Panc1 (cell line): ENCODE measurements at regions of chr3 and their contacts with region 1.

Region 1: GRCh38 chr3:25594007-25594502 is 70.7 kb downstream of the TOP2B start:
- DNase-seq: no peak
- ATAC-seq: no peak
- H3K4me3 ChIP-seq: no peak overlapping the region
- H3K27ac ChIP-seq: no peak overlapping the region
- H3K4me1 ChIP-seq: no peaks in the 10 kb centered on the region
- H3K27me3 ChIP-seq: no peaks in the 10 kb centered on the region
- CTCF ChIP-seq: peak; percentile 62; the same call in 1 of the 2 replicates

Region 2: GRCh38 chr3:24773798-24774197 is 820.3 kb before region 1 on chr3:
- CTCF ChIA-PET with region 1: no interaction called
- POLR2A ChIA-PET with region 1: no interaction called
- in situ Hi-C with region 1: no loop called
- intact Hi-C with region 1: loop called (anchors 2 kb)
- DNase-seq: peak; percentile 24
- ATAC-seq: peak; percentile 73; the same call in 1 of the 2 replicates
- H3K4me3 ChIP-seq: no peak overlapping the region
- H3K27ac ChIP-seq: no peak overlapping the region
- H3K4me1 ChIP-seq: no peaks in the 10 kb centered on the region
- H3K27me3 ChIP-seq: no peaks in the 10 kb centered on the region
- CTCF ChIP-seq: peak; percentile 75

Region 3: DNA sequence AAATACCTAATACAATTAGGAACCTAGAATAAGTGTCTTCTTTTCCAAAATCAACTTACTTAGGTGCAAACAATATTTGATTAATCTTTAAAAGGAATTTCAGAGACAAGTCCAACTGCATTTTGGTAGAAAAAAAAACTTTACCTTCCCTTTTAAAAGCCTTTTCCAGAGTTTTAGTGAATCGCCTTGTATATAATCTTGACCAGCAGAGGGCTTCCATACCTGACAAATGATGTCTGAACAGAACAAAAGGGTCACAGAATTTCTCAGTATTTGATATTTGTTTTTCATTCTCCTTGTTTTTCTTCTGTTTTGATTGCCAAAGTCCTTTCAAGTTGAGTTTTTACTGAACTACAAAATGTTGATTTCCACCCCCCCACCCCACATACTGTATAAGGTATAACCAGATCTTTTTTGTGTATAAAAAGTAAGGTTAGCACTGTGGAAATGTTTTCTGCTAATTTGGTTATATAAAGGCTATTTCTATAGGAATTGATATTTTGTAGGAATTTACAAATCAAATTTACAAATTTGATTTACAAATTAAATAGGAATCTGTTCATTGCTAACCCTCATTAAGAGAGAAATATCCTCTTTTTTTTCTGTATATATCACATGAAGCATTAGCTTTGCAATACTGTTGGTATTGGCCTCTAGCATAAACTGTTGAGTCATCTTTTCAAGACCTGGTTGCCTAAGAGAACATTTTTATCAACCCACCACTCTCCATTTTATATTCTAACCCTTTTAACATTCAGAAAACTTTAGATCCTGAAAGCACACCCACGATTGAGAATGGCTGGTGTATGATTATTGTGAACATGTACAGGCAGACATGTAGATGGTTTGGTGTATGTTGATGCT is 630.1 kb before region 1 on chr3:
- CTCF ChIA-PET with region 1: no interaction called
- POLR2A ChIA-PET with region 1: no interaction called
- in situ Hi-C with region 1: no loop called
- intact Hi-C with region 1: loop called (anchors 5 kb)
- DNase-seq: peak; percentile 0
- ATAC-seq: no peak
- H3K4me3 ChIP-seq: no peak overlapping the region
- H3K27ac ChIP-seq: no peak overlapping the region
- H3K4me1 ChIP-seq: no peaks in the 10 kb centered on the region
- H3K27me3 ChIP-seq: no peaks in the 10 kb centered on the region
- CTCF ChIP-seq: peak; percentile 47; the same call in 1 of the 2 replicates